CD4-positive, alpha-beta T cell (primary cell): ENCODE measurements at regions of chr19 and their contacts with region 1.

Region 1: GRCh38 chr19:21851596-21852345 is 15.8 kb upstream of the ZNF43 start:
- DNase-seq: peak; percentile 79 to 94 (median 86)
- ATAC-seq: peak; percentile 99
- H3K4me3 ChIP-seq: peak overlapping the region; percentile 72
- H3K4me3 Mint-ChIP-seq: peak overlapping the region; percentile 97
- H3K27ac ChIP-seq: peak overlapping the region; percentile 55 to 56
- H3K27ac Mint-ChIP-seq: peak overlapping the region; percentile 94
- H3K4me1 ChIP-seq: peaks cover 14% of the 10 kb centered on the region
- H3K4me1 Mint-ChIP-seq: peaks cover 28% of the 10 kb centered on the region
- H3K27me3 ChIP-seq: no peaks in the 10 kb centered on the region
- H3K27me3 Mint-ChIP-seq: no peaks in the 10 kb centered on the region
- CTCF ChIP-seq: no peak

Region 2: GRCh38 chr19:20423381-20424197 is 1428.2 kb before region 1 on chr19:
- CTCF ChIA-PET with region 1: no interaction called
- POLR2A ChIA-PET with region 1: no interaction called
- intact Hi-C with region 1: loop called in 1 of 2 experiments (anchors 10 kb)
- DNase-seq: peak in 9 of 14 experiments; percentile 6 to 64 (median 34)
- ATAC-seq: no peak
- H3K4me3 ChIP-seq: peak overlapping the region; percentile 83
- H3K4me3 Mint-ChIP-seq: peak overlapping the region; percentile 97
- H3K27ac ChIP-seq: peak overlapping the region; percentile 57 to 65
- H3K27ac Mint-ChIP-seq: peak overlapping the region; percentile 90
- H3K4me1 ChIP-seq: peaks cover 9% of the 10 kb centered on the region
- H3K4me1 Mint-ChIP-seq: peaks cover 15% of the 10 kb centered on the region
- H3K27me3 ChIP-seq: no peaks in the 10 kb centered on the region
- H3K27me3 Mint-ChIP-seq: no peaks in the 10 kb centered on the region
- CTCF ChIP-seq: no peak

Region 3: GRCh38 chr19:21020298-21021227 is 831.2 kb before region 1 on chr19 and contains the start of gene ZNF430:
- CTCF ChIA-PET with region 1: no interaction called
- POLR2A ChIA-PET with region 1: interaction called, 3 read pairs
- intact Hi-C with region 1: loop called in 1 of 2 experiments (anchors 10 kb)
- DNase-seq: peak; percentile 82 to 98 (median 87)
- ATAC-seq: peak; percentile 95
- H3K4me3 ChIP-seq: peak within 1 kb of the TSS; percentile 98
- H3K4me3 Mint-ChIP-seq: peak within 1 kb of the TSS; percentile 98
- H3K27ac ChIP-seq: peak within 1 kb of the TSS; percentile 86 to 93
- H3K27ac Mint-ChIP-seq: peak within 1 kb of the TSS; percentile 100
- H3K4me1 ChIP-seq: peaks cover 29% of the 10 kb centered on the region
- H3K4me1 Mint-ChIP-seq: peaks cover 52% of the 10 kb centered on the region
- H3K27me3 ChIP-seq: no peaks in the 10 kb centered on the region
- H3K27me3 Mint-ChIP-seq: no peaks in the 10 kb centered on the region
- CTCF ChIP-seq: no peak
- total RNA-seq, gene ZNF430: 40.5 to 43.8 TPM

Region 4: GRCh38 chr19:21328885-21329605 is 522.7 kb before region 1 on chr19 and contains the start of gene ZNF708:
- CTCF ChIA-PET with region 1: no interaction called
- POLR2A ChIA-PET with region 1: interaction called, 5 read pairs
- intact Hi-C with region 1: loop called in 1 of 2 experiments (anchors 10 kb)
- DNase-seq: peak; percentile 41 to 96 (median 59)
- ATAC-seq: peak; percentile 91
- H3K4me3 ChIP-seq: peak within 1 kb of the TSS; percentile 99
- H3K4me3 Mint-ChIP-seq: peak within 1 kb of the TSS; percentile 96
- H3K27ac ChIP-seq: peak within 1 kb of the TSS; percentile 83 to 99
- H3K27ac Mint-ChIP-seq: peak within 1 kb of the TSS; percentile 98
- H3K4me1 ChIP-seq: peaks cover 22% of the 10 kb centered on the region
- H3K4me1 Mint-ChIP-seq: peaks cover 50% of the 10 kb centered on the region
- H3K27me3 ChIP-seq: no peaks in the 10 kb centered on the region
- H3K27me3 Mint-ChIP-seq: no peaks in the 10 kb centered on the region
- CTCF ChIP-seq: no peak
- total RNA-seq, gene ZNF708: 15.5 to 16.4 TPM

Region 5: DNA sequence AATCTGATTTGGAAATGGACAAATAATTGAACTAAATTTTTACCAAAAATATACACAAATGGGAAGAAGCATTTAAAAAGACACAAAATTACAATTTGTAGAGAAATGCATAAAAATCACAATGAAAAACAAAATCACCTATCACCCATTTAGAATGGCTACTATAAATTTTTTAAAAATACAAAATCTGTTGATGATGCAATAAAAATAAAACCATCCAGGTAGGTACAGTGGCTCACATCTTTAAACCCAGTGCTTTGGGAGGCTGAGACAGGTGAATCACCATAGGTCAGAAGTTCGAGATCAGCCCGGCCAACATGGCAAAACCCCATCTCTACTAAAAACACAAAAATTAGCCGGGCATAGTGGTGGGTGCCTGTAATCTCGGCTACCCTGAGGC is 39.3 kb before region 1 on chr19:
- CTCF ChIA-PET with region 1: no interaction called
- POLR2A ChIA-PET with region 1: no interaction called
- intact Hi-C with region 1: no loop called
- DNase-seq: no peak
- ATAC-seq: no peak
- H3K4me3 ChIP-seq: no peak overlapping the region
- H3K4me3 Mint-ChIP-seq: no peak overlapping the region
- H3K27ac ChIP-seq: no peak overlapping the region
- H3K27ac Mint-ChIP-seq: no peak overlapping the region
- H3K4me1 ChIP-seq: no peaks in the 10 kb centered on the region
- H3K4me1 Mint-ChIP-seq: no peaks in the 10 kb centered on the region
- H3K27me3 ChIP-seq: no peaks in the 10 kb centered on the region
- H3K27me3 Mint-ChIP-seq: no peaks in the 10 kb centered on the region
- CTCF ChIP-seq: no peak

Region 6: GRCh38 chr19:21835810-21836444 is 15.8 kb before region 1 on chr19 and contains the start of gene ZNF43:
- CTCF ChIA-PET with region 1: interaction called, 3 read pairs
- POLR2A ChIA-PET with region 1: interaction called, 109 read pairs
- intact Hi-C with region 1: loop called (anchors 1 kb)
- DNase-seq: peak; percentile 87 to 97 (median 91)
- ATAC-seq: peak; percentile 98
- H3K4me3 ChIP-seq: peak within 1 kb of the TSS; percentile 81
- H3K4me3 Mint-ChIP-seq: peak within 1 kb of the TSS; percentile 97
- H3K27ac ChIP-seq: peak within 1 kb of the TSS; percentile 82 to 83
- H3K27ac Mint-ChIP-seq: peak within 1 kb of the TSS; percentile 94
- H3K4me1 ChIP-seq: peaks cover 14% of the 10 kb centered on the region
- H3K4me1 Mint-ChIP-seq: peaks cover 33% of the 10 kb centered on the region
- H3K27me3 ChIP-seq: no peaks in the 10 kb centered on the region
- H3K27me3 Mint-ChIP-seq: no peaks in the 10 kb centered on the region
- CTCF ChIP-seq: no peak
- total RNA-seq, gene ZNF43: 26.1 to 30.2 TPM

Region 7: GRCh38 chr19:22634450-22634827 is 782.7 kb after region 1 on chr19:
- CTCF ChIA-PET with region 1: no interaction called
- POLR2A ChIA-PET with region 1: no interaction called
- intact Hi-C with region 1: loop called in 1 of 2 experiments (anchors 10 kb)
- DNase-seq: no peak
- ATAC-seq: peak; percentile 16
- H3K4me3 ChIP-seq: peak overlapping the region; percentile 65
- H3K4me3 Mint-ChIP-seq: peak overlapping the region; percentile 96
- H3K27ac ChIP-seq: no peak overlapping the region
- H3K27ac Mint-ChIP-seq: peak overlapping the region; percentile 83
- H3K4me1 ChIP-seq: no peaks in the 10 kb centered on the region
- H3K4me1 Mint-ChIP-seq: peaks cover 16% of the 10 kb centered on the region
- H3K27me3 ChIP-seq: peaks cover 0 to 2% of the 10 kb centered on the region in 2 experiments
- H3K27me3 Mint-ChIP-seq: no peaks in the 10 kb centered on the region
- CTCF ChIP-seq: no peak